GM10248 (cell line): ENCODE measurements at regions of chr22 and their contacts with region 1.

Region 1: GRCh38 chr22:20624161-20624616 is 116.8 kb downstream of the MED15 start:
- DNase-seq: peak; percentile 62
- CTCF ChIP-seq: no peak

Region 2: GRCh38 chr22:20405931-20406685 is 218.1 kb before region 1 on chr22:
- CTCF ChIA-PET with region 1: no interaction called
- POLR2A ChIA-PET with region 1: no interaction called
- DNase-seq: no peak
- CTCF ChIP-seq: no peak

Region 3: DNA sequence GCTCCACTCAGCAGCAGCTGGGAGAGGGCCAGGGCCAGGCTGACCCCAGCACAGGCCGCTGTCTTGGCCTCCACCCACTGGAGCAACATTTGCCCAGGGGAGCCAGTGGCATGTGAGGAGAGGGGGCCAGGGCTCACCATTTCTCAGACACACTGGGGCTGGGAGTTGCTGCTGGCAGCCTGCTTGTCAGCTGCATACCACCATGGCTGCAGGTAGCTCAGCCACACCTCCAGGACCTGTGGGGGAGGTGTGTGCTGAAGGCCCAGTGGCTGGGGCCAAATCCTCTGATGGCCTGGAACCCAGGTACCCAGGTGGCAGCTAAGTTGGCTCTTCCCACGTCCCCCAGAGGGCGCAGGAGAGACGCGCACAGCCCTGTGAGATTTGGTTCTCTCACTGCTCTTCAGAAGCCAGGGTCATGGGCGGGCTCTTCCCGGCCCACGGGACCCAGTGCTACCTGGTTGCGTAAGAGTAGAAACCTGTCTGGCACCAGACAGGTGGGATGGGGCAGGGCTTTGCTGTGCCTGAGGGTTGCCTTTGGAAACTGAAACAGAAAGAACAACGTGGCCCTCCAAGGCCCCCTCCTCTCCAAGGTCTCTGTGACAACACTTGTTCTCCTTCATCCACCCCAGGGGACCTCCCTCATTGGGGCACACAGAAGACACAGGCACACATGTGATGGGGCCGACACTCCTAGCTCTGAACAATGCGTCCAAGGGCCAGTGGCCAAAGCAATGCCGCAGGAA is 18.0 kb before region 1 on chr22:
- CTCF ChIA-PET with region 1: interaction called, 53 read pairs
- POLR2A ChIA-PET with region 1: interaction called, 3 read pairs
- DNase-seq: peak; percentile 85
- CTCF ChIP-seq: peak; percentile 88

Region 4: DNA sequence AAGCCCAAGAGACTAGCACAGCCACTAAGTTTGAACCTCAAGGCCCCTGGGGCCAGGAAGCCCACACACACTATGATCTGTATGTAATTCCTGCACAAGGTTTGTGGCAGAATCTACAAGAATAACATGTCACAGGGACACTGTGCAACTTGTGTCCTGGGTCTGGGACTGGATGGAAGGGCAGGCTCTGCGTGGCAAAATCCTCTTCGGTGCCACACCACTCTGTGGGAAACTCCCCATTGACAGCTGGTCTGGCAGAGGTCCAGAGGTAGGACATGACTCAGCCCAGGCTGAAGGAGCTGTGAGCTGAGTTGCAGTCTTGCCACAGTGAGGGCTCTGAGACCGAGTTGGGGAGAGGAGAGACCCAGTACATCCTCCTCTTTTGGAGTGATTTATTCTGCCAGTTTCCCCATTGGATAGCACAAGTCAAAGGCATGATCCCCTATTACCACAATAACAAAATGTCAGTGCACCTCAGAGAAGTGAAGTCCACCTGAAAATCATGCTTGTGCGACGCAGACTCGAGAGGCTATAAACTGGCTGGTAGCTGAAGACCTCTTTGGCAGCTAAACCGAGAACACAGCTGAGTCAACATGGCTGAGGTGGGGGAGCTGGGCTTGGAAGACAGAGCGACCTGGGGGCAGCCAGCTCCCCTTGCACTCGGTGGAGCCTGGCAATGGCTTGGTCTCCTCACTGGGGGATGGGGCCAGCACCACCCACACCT is 126.4 kb after region 1 on chr22:
- CTCF ChIA-PET with region 1: no interaction called
- POLR2A ChIA-PET with region 1: no interaction called
- DNase-seq: peak; percentile 79
- CTCF ChIP-seq: no peak